Activated CD4-positive, alpha-beta memory T cell treated with anti-CD3 and anti-CD28 coated beads for 36 hours (primary cell): ENCODE measurements at regions of chr3 and their contacts with region 1.

Region 1: DNA sequence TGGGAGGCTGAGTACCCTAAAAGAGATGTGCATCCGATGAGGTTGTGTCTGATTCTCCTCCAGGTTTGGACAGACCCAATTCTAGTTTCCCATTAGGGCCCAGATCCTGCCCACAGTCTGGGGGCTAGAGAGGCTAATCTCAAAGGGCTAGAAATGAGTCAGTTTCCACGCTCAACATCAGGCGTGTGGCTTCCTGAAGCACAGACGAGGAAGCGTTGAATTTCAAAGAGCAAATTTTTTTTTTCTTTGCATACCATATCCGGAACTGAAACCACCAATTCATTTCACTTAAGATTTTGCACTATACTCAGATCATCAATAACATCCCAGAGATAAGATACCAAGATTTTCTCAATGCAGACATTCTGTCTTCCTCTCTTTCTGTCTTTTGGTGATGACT is 173.8 kb upstream of the BCL6 start:
- DNase-seq: peak; percentile 75
- H3K4me3 Mint-ChIP-seq: peak overlapping the region; percentile 51
- H3K27ac Mint-ChIP-seq: peak overlapping the region; percentile 94
- H3K4me1 Mint-ChIP-seq: peaks cover 75% of the 10 kb centered on the region
- H3K27me3 Mint-ChIP-seq: peaks cover 3% of the 10 kb centered on the region

Region 2: DNA sequence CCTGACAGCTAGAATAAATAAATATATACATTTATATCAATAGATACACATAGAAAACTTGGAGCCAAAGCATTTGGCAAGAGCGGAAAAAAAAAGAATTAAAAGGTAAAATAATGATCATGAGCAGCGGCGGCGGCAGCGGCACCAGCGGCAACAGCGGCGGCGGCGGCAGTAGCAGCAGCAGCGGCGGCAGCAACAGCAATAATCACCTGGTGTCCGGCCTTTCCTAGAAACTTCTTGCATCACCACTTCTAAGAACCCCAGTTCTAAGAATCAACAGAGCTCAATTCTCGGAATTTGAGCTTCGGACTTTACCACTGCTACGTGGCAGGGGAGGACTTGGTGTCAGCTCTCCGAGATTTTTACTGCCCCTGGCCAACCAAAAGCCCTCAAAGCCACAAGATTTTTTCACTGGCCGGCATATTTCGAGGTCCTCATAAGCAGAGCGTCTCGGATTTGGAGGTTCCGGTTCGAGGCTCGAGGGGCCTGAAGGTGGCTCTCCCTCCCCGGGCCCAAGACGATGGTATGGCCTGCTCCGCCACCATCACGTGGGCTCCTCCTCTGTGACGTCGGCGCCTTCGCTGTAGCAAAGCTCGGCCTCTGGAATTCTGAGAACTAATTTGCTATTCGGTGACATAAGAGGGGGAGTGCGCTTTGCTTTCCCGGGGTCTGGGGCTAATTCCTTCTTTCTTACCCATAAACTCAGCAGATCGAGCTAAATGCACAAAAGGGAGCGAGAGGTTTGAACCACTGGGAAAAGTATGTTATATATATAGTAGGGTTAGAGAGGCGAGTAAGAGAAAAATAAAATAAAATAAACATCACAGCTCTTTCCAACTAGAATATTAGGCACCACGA is 173.6 kb before region 1 on chr3 and contains the start of gene BCL6:
- CTCF ChIA-PET with region 1: interaction called, 16 read pairs
- POLR2A ChIA-PET with region 1: interaction called, 15 read pairs
- intact Hi-C with region 1: loop called (anchors 1 kb)
- DNase-seq: peak; percentile 91
- H3K4me3 Mint-ChIP-seq: peak within 1 kb of the TSS; percentile 90
- H3K27ac Mint-ChIP-seq: peak within 1 kb of the TSS; percentile 99
- H3K4me1 Mint-ChIP-seq: peaks cover 47% of the 10 kb centered on the region
- H3K27me3 Mint-ChIP-seq: no peaks in the 10 kb centered on the region
- total RNA-seq, gene BCL6: 41.4 to 51.3 TPM

Region 3: GRCh38 chr3:187935623-187936156 is 16.6 kb after region 1 on chr3:
- CTCF ChIA-PET with region 1: no interaction called
- POLR2A ChIA-PET with region 1: no interaction called
- intact Hi-C with region 1: loop called (anchors 1 kb)
- DNase-seq: peak; percentile 78
- H3K4me3 Mint-ChIP-seq: no peak overlapping the region
- H3K27ac Mint-ChIP-seq: peak overlapping the region; percentile 61
- H3K4me1 Mint-ChIP-seq: peaks cover 40% of the 10 kb centered on the region
- H3K27me3 Mint-ChIP-seq: peaks cover 4% of the 10 kb centered on the region

Region 4: GRCh38 chr3:188046561-188047208 is 127.6 kb after region 1 on chr3:
- CTCF ChIA-PET with region 1: no interaction called
- POLR2A ChIA-PET with region 1: no interaction called
- intact Hi-C with region 1: no loop called
- DNase-seq: no peak
- H3K4me3 Mint-ChIP-seq: no peak overlapping the region
- H3K27ac Mint-ChIP-seq: no peak overlapping the region
- H3K4me1 Mint-ChIP-seq: peaks cover 20% of the 10 kb centered on the region
- H3K27me3 Mint-ChIP-seq: no peaks in the 10 kb centered on the region

Region 5: GRCh38 chr3:188123170-188123905 is 204.3 kb after region 1 on chr3:
- CTCF ChIA-PET with region 1: no interaction called
- POLR2A ChIA-PET with region 1: no interaction called
- intact Hi-C with region 1: loop called (anchors 2 kb)
- DNase-seq: peak; percentile 21
- H3K4me3 Mint-ChIP-seq: no peak overlapping the region
- H3K27ac Mint-ChIP-seq: peak overlapping the region; percentile 63
- H3K4me1 Mint-ChIP-seq: peaks cover 20% of the 10 kb centered on the region
- H3K27me3 Mint-ChIP-seq: peaks cover 1% of the 10 kb centered on the region

Region 6: GRCh38 chr3:188294823-188295487 is 375.9 kb after region 1 on chr3:
- CTCF ChIA-PET with region 1: no interaction called
- POLR2A ChIA-PET with region 1: no interaction called
- intact Hi-C with region 1: loop called (anchors 2 kb)
- DNase-seq: no peak
- H3K4me3 Mint-ChIP-seq: no peak overlapping the region
- H3K27ac Mint-ChIP-seq: peak overlapping the region; percentile 72
- H3K4me1 Mint-ChIP-seq: peaks cover 79% of the 10 kb centered on the region
- H3K27me3 Mint-ChIP-seq: no peaks in the 10 kb centered on the region

Region 7: DNA sequence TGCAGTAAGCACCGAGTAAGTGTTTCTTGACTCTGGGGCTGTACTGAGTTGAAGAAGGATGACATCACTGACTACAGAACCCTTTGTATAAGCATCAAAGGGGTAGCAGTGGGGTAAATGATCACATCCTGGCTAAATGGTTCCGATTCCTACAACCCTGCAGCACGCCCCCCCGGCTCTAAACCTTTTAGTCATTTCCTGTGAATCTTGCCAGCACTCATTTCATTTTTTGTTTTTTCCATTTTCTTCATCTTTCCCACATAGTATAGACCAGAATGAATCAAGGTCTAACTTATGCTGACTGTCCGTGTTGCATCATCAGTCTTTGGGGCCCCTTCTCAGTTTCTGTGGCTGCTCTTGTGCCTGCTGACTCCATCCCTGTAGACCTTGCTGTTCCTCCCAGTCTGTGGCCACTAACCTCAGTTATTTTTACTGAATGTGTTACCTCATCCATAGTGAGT is 869.6 kb after region 1 on chr3:
- CTCF ChIA-PET with region 1: no interaction called
- POLR2A ChIA-PET with region 1: no interaction called
- intact Hi-C with region 1: loop called (anchors 1 kb)
- DNase-seq: peak; percentile 88
- H3K4me3 Mint-ChIP-seq: no peak overlapping the region
- H3K27ac Mint-ChIP-seq: no peak overlapping the region
- H3K4me1 Mint-ChIP-seq: peaks cover 2% of the 10 kb centered on the region
- H3K27me3 Mint-ChIP-seq: no peaks in the 10 kb centered on the region